Breast epithelium (tissue), 4 donors: ENCODE measurements at regions of chr5 and their contacts with region 1.

Region 1: GRCh38 chr5:174159327-174160247 is 114.1 kb downstream of the NSG2 start:
- DNase-seq: no peak
- H3K4me3 ChIP-seq: no peak overlapping the region
- H3K27ac ChIP-seq: no peak overlapping the region
- H3K4me1 ChIP-seq: no peaks in the 10 kb centered on the region
- H3K27me3 ChIP-seq: no peaks in the 10 kb centered on the region
- CTCF ChIP-seq: no peak
- POLR2A ChIP-seq: no peak

Region 2: DNA sequence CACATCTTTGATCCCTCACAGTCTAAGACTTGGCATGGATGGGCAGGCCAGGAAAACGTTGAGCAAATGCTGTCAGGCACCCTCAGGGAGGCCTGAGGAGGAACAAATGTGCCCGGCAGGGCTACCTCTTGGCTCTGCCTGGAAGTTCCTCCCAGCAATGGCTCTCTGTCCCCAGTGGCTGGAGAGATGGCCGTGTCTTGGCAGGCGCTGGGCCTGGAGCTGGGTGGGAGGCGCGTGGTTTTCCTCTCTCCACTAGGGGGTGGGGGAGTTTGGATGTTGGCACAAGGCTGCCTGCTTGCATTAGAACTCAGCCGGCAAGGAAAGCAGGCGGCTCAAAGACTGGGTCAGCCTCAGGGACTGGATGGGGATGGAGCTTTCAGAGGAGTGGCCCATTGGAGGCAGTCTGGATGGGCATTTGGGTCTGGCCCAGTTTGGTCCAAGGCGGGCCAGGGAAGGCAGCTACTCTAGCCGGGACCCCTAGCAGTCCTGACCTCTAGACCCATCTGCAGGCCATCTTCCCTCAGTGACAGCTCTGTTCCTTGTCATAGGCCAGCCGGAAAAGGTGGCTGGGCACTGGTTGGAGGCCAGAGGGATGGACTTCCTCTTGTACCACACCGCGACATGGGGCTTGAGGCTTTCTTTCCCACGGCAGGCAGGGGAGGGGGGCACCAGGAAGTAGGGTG is 763.1 kb before region 1 on chr5:
- intact Hi-C with region 1: no loop called
- DNase-seq: no peak
- H3K4me3 ChIP-seq: no peak overlapping the region
- H3K27ac ChIP-seq: peak overlapping the region in 1 of 2 donors; percentile 29
- H3K4me1 ChIP-seq: no peaks in the 10 kb centered on the region
- H3K27me3 ChIP-seq: no peaks in the 10 kb centered on the region
- CTCF ChIP-seq: no peak
- POLR2A ChIP-seq: no peak

Region 3: DNA sequence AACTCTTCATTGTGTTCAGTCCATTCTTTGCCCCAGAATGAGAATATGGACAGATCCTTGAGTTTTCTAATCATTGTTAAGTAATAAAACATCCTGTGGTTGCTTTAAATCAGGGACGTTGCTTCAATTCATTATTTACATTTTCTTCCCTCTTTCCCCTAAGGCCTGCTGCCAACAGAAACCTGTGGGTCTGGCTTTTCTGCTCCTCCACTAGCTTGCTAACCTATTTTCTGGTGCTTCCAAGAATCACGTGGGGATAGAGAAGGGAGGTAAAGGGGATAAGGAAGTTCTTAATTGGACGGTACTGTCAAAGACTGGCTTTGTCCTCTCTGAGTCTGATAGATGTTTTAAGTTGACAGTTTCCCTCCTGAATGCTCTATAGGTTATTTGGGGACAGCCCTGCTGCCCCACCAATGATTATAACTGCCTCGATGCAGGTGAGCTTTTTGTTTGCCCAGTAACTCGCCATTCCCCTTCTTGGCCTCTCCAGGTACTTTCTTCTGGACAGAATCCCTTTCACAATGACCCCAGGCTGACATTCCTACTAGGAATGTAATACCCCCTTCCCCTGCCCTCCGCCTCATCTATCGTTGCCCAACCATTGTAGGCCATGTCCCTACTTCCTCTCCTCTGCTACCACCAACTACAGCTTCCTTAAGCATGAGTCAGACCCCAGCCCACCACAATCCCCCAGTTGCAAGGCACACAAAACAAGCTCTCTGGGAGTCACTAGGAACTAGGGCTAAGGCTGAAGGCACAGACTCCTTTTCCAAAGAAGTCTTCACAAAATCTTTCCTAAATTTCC is 291.3 kb before region 1 on chr5:
- intact Hi-C with region 1: no loop called
- DNase-seq: peak in 1 of 2 donors; percentile 47
- H3K4me3 ChIP-seq: no peak overlapping the region
- H3K27ac ChIP-seq: peak overlapping the region; percentile 73 to 76
- H3K4me1 ChIP-seq: peaks cover 0 to 8% of the 10 kb centered on the region in 2 donors
- H3K27me3 ChIP-seq: no peaks in the 10 kb centered on the region
- CTCF ChIP-seq: no peak
- POLR2A ChIP-seq: no peak

Region 4: DNA sequence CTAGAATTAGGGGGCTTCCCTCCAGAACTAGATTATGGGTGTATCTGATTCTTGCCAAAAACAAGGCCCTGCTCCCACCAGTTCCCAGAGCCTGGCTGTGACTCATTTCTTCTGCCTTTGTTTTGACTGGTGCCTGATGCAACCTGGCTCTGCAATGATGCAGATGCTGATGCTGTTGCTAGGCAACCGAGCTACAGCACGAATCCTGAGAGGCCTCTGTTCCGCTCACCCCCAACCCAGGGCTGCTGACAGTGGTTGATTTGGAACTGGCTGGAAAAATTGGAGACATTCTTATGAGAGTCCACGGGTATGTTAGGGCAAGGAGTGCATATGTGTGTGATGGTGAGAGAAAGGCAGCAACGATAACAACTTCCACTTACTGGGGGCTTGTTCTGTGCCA is 13.8 kb before region 1 on chr5:
- intact Hi-C with region 1: loop called (anchors 1 kb)
- DNase-seq: no peak
- H3K4me3 ChIP-seq: no peak overlapping the region
- H3K27ac ChIP-seq: no peak overlapping the region
- H3K4me1 ChIP-seq: no peaks in the 10 kb centered on the region
- H3K27me3 ChIP-seq: no peaks in the 10 kb centered on the region
- CTCF ChIP-seq: no peak
- POLR2A ChIP-seq: no peak

Region 5: GRCh38 chr5:174371595-174372128 is 212.1 kb after region 1 on chr5:
- intact Hi-C with region 1: no loop called
- DNase-seq: no peak
- H3K4me3 ChIP-seq: no peak overlapping the region
- H3K27ac ChIP-seq: no peak overlapping the region
- H3K4me1 ChIP-seq: no peaks in the 10 kb centered on the region
- H3K27me3 ChIP-seq: no peaks in the 10 kb centered on the region
- CTCF ChIP-seq: no peak
- POLR2A ChIP-seq: no peak